ENCODE measurements at regions of chr3 and their contacts with region 1.

Region 1: DNA sequence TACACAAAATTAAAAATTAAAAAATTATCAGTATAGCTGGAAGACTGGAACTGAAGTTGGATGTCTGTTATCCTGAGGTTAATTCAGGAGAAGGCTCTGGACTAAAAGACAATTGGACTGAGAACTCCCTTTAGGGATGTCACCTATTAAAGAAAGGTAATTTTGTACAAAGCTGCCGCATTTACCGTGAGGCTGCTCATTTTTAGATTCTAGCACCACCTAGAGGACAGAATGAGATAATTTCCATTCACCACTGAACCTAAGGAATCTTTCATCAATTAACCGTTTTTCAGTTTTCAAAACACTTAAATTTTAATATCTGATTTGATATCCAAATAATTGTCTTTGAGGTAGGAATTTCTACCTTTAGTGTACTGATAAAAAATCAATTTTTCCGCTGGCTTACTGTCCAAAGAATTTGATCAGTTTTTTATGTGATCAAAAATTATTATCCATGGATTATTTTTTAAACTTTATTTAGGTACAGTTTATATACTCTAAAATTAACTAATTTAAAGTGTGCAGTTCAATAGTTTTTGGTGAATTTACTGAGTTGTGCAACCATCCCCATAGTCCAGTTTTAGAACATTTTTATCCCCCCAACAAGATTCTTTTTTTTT is 106.7 kb upstream of the TNIK start:
- DNase-seq: no peak
- ATAC-seq: peak; percentile 64
- H3K4me3 Mint-ChIP-seq: no peak overlapping the region
- H3K27ac Mint-ChIP-seq: no peak overlapping the region
- H3K4me1 Mint-ChIP-seq: peaks cover 4% of the 10 kb centered on the region
- H3K27me3 Mint-ChIP-seq: peaks cover 2% of the 10 kb centered on the region
- CTCF ChIP-seq: peak; percentile 84

Region 2: GRCh38 chr3:170961616-170962400 is 605.1 kb before region 1 on chr3:
- CTCF ChIA-PET with region 1: interaction called, 11 read pairs
- POLR2A ChIA-PET with region 1: no interaction called
- intact Hi-C with region 1: loop called (anchors 5 kb)
- DNase-seq: peak; percentile 16
- ATAC-seq: no peak
- H3K4me3 Mint-ChIP-seq: no peak overlapping the region
- H3K27ac Mint-ChIP-seq: no peak overlapping the region
- H3K4me1 Mint-ChIP-seq: no peaks in the 10 kb centered on the region
- H3K27me3 Mint-ChIP-seq: peaks cover 1% of the 10 kb centered on the region
- CTCF ChIP-seq: peak; percentile 76

Region 3: GRCh38 chr3:171156401-171157067 is 410.4 kb before region 1 on chr3:
- CTCF ChIA-PET with region 1: interaction called, 12 read pairs
- POLR2A ChIA-PET with region 1: no interaction called
- intact Hi-C with region 1: no loop called
- DNase-seq: no peak
- ATAC-seq: no peak
- H3K4me3 Mint-ChIP-seq: no peak overlapping the region
- H3K27ac Mint-ChIP-seq: no peak overlapping the region
- H3K4me1 Mint-ChIP-seq: no peaks in the 10 kb centered on the region
- H3K27me3 Mint-ChIP-seq: no peaks in the 10 kb centered on the region
- CTCF ChIP-seq: no peak

Region 4: GRCh38 chr3:171187706-171188290 is 379.1 kb before region 1 on chr3:
- CTCF ChIA-PET with region 1: interaction called, 16 read pairs
- POLR2A ChIA-PET with region 1: no interaction called
- intact Hi-C with region 1: no loop called
- DNase-seq: peak; percentile 11
- ATAC-seq: no peak
- H3K4me3 Mint-ChIP-seq: no peak overlapping the region
- H3K27ac Mint-ChIP-seq: peak overlapping the region; percentile 15
- H3K4me1 Mint-ChIP-seq: peaks cover 57% of the 10 kb centered on the region
- H3K27me3 Mint-ChIP-seq: no peaks in the 10 kb centered on the region
- CTCF ChIP-seq: peak; percentile 64

Region 5: GRCh38 chr3:171514466-171514865 is 52.4 kb before region 1 on chr3:
- CTCF ChIA-PET with region 1: interaction called, 11 read pairs
- POLR2A ChIA-PET with region 1: no interaction called
- intact Hi-C with region 1: no loop called
- DNase-seq: no peak
- ATAC-seq: no peak
- H3K4me3 Mint-ChIP-seq: no peak overlapping the region
- H3K27ac Mint-ChIP-seq: no peak overlapping the region
- H3K4me1 Mint-ChIP-seq: no peaks in the 10 kb centered on the region
- H3K27me3 Mint-ChIP-seq: no peaks in the 10 kb centered on the region
- CTCF ChIP-seq: peak; percentile 32

Measured in activated CD8-positive, alpha-beta T cell treated with anti-CD3 and anti-CD28 coated beads for 36 hours (primary cell).